B cell (primary cell): ENCODE measurements at regions of chr2 and their contacts with region 1.

Region 1: DNA sequence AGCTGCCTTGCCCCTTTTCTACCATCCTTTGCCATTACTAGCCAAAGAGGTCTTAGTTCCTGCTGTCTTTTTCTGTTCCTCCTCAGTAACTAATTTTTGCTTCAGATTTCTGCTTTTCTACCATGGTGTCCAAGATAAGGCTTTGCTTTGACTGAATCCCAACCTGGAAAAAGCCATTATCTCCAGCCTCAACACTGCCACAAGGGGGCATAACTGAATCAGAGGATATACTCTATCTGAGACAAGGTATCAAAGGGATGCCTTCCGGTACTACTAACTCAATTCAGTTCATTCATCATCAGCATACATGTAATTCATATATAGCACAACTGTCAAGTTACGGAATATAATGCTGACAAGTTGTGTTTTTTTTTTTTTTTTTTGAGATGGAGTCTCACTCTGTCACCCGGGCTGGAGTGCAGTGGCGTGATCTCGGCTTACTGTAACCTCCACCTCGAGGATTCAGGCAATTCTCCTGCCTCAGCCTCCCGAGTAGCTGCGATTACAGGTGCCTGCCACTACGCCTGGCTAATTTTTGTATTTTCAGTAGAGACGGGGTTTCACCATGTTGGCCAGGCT is 11.4 kb downstream of the OSGEPL1 start:
- DNase-seq: peak; percentile 53
- ATAC-seq: no peak
- H3K4me3 ChIP-seq: no peak overlapping the region
- H3K4me3 Mint-ChIP-seq: no peak overlapping the region
- H3K27ac ChIP-seq: no peak overlapping the region
- H3K27ac Mint-ChIP-seq: peak overlapping the region; percentile 67
- H3K4me1 ChIP-seq: no peaks in the 10 kb centered on the region
- H3K4me1 Mint-ChIP-seq: no peaks in the 10 kb centered on the region
- H3K27me3 ChIP-seq: no peaks in the 10 kb centered on the region
- H3K27me3 Mint-ChIP-seq: no peaks in the 10 kb centered on the region
- CTCF ChIP-seq: peak; percentile 69

Region 2: DNA sequence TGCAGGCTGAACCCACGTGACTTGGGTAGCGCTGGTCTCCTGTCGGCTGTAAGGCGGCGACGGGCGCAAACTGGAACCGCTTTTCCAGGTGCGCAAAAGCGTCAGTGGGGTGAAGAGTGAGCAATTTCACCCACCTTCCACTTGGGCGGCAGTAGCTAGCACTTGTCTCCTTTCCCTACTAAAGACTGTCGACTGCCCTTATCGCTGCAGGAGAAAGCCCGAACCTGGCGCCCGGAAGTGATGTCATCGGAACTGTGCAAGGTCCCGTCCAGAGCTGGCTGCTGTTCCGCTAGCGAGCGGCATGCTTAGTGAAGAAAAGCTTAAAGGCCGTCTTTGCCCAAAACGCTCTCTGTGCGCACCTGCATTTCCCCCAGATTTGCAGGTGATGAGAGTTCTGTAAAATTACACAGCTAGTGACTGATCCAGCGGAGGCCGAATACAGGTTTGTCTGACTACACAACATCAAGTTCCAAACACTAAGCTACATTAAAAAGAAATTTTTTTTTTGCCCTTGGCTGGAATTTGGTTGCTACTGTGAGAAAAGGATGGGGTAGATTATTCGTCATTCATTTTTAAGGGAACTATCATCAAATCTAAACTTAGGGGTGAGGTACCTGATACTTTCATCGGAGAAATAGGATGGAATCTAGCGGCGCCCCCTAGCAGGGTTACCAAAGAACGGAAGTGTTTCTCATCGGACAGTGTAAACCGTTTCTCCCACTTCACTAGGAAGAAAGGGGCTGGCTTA is 11.6 kb after region 1 on chr2 and contains the start of gene OSGEPL1:
- CTCF ChIA-PET with region 1: interaction called, 33 read pairs
- POLR2A ChIA-PET with region 1: interaction called, 3 read pairs
- intact Hi-C with region 1: loop called (anchors 1 kb)
- DNase-seq: peak; percentile 96
- ATAC-seq: peak; percentile 92
- H3K4me3 ChIP-seq: peak within 1 kb of the TSS; percentile 67 to 100 (median 95)
- H3K4me3 Mint-ChIP-seq: peak within 1 kb of the TSS; percentile 98
- H3K27ac ChIP-seq: peak within 1 kb of the TSS; percentile 77 to 89
- H3K27ac Mint-ChIP-seq: peak within 1 kb of the TSS; percentile 98
- H3K4me1 ChIP-seq: peaks cover 9 to 10% of the 10 kb centered on the region in 2 donors
- H3K4me1 Mint-ChIP-seq: peaks cover 6% of the 10 kb centered on the region
- H3K27me3 ChIP-seq: no peaks in the 10 kb centered on the region
- H3K27me3 Mint-ChIP-seq: no peaks in the 10 kb centered on the region
- CTCF ChIP-seq: peak; percentile 73
- total RNA-seq, gene OSGEPL1: 11.2 and 12.6 TPM in 2 replicates

Region 3: DNA sequence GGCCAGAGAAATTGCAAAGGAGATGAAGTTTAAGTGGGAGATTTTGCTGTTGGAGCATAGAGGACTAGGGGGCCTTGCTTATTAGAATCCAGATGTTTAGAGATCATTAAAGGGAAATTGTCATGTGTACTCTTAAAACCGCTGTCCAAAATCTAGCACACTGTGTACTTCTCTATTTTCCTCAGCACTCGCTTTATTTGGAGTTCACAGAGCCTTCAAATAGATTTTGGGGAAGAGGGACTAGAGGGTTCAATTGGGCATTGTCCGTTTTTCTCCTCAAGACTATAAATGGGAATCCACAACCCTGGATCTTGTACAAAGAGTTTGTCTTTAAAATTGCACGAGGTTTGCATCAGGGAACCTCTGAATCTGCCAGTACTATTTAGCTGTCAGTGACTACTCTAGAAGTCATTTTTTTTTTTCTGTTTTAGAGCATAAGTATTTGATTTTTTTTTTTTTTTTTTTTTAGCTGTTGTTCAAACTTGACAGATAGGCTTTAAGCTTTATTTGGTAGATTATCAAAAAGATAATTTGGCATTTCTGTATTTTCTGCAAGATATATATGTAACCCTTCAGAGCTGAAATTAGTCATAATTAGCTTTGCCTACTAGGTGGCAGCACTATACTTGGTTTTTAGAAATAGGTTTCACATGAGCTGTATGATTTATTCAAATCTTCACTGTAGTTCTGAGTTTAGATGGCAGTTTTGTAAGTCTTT is 47.3 kb after region 1 on chr2:
- CTCF ChIA-PET with region 1: interaction called, 9 read pairs
- POLR2A ChIA-PET with region 1: no interaction called
- intact Hi-C with region 1: loop called (anchors 10 kb)
- DNase-seq: peak; percentile 39
- ATAC-seq: no peak
- H3K4me3 ChIP-seq: no peak overlapping the region
- H3K4me3 Mint-ChIP-seq: no peak overlapping the region
- H3K27ac ChIP-seq: no peak overlapping the region
- H3K27ac Mint-ChIP-seq: no peak overlapping the region
- H3K4me1 ChIP-seq: no peaks in the 10 kb centered on the region
- H3K4me1 Mint-ChIP-seq: peaks cover 6% of the 10 kb centered on the region
- H3K27me3 ChIP-seq: no peaks in the 10 kb centered on the region
- H3K27me3 Mint-ChIP-seq: no peaks in the 10 kb centered on the region
- CTCF ChIP-seq: peak; percentile 49